ENCODE measurements at regions of chr13 and their contacts with region 1.

Region 1: GRCh38 chr13:112443995-112444860 is 68.1 kb downstream of the SPACA7 start:
- DNase-seq: peak; percentile 64 to 98
- H3K4me3 ChIP-seq: no peak overlapping the region
- H3K27ac ChIP-seq: no peak overlapping the region
- H3K4me1 ChIP-seq: peaks cover 0 to 4% (median 1%) of the 10 kb centered on the region in 4 experiments; a peak in 2 of 7 replicates
- H3K27me3 ChIP-seq: peaks cover 0 to 3% (median under 1%) of the 10 kb centered on the region in 4 experiments; a peak in 3 of 7 replicates
- CTCF ChIP-seq: peak in 2 of 3 experiments; percentile 94 to 99; a peak in 3 of 4 replicates
- EP300 ChIP-seq: no peak
- POLR2A ChIP-seq: no peak
- RAD21 ChIP-seq: peak; percentile 100

Region 2: DNA sequence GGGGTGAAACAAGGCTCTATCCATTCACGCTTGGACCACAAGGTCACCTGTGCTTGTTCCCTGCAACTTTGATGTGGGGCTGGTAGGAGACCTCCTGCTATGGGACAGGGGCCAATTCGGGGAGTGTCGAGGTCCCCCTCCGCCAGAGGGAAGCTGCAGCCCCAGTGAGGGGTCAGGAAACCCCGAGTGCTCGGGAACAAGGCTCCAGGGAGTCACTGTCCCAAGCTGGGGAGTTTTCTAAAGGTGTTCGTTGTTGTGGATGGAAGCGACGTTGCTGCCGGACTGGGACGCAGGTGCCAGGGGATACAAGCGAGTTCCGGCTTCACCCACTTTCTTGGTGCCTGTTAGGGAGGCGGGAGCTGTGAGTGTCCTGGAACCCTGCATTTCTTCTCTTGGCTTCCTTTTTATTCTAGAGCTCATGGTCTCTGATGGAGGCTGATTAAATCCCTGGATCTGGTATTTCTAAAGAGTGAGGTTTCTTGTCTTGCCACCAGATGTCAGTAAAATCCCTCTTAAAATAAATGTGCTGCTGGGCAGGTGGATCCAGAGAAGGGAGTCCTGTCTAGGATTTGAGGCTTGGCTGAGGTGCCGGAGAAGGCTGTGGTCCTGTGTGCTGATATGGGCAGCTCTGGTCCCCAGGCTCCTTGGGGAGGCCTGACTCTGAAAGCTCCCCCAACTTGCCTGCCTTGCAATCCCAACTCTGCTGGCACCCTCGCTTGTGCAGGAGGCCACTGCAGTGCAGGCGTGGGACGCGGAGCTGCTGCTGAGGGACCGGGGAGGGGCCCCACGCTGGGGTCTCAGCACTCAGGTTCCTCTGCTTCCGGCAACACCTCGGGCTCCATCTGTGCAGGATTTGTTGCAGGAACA is 969.9 kb before region 1 on chr13:
- CTCF ChIA-PET with region 1: interaction called, 43 read pairs
- POLR2A ChIA-PET with region 1: no interaction called
- DNase-seq: peak; percentile 25 to 47
- H3K4me3 ChIP-seq: no peak overlapping the region
- H3K27ac ChIP-seq: no peak overlapping the region
- H3K4me1 ChIP-seq: no peaks in the 10 kb centered on the region
- H3K27me3 ChIP-seq: no peaks in the 10 kb centered on the region
- CTCF ChIP-seq: peak in 2 of 3 experiments; percentile 55 to 57; a peak in 3 of 4 replicates
- EP300 ChIP-seq: no peak
- POLR2A ChIP-seq: no peak
- RAD21 ChIP-seq: peak; percentile 87 to 93

Region 3: DNA sequence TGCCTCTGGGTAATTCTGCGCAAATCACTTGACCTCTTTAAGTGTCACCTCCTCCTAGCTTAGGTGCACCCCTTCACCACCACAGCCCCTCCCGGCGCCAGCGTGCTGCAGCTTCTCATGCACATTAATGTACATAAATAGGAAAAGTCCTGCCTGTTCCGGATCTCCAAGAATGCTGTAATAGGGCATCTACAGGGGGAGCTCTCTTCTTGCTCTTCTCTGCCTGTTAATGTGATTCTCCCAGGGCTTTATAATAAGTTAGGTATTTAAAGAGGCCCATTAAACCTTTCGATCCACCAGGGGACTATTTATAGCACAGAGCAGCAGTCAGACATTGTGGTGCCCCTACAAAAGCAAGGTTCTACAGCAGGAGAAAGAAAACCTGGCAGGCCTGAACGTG is 342.0 kb before region 1 on chr13:
- CTCF ChIA-PET with region 1: interaction called, 14 read pairs
- POLR2A ChIA-PET with region 1: no interaction called
- DNase-seq: peak in 1 of 2 experiments; percentile 43
- H3K4me3 ChIP-seq: no peak overlapping the region
- H3K27ac ChIP-seq: no peak overlapping the region
- H3K4me1 ChIP-seq: peaks cover 0 to 28% (median 13%) of the 10 kb centered on the region in 4 experiments; a peak in 6 of 7 replicates
- H3K27me3 ChIP-seq: peaks cover 23 to 64% (median 56%) of the 10 kb centered on the region in 4 experiments
- CTCF ChIP-seq: peak in 2 of 3 experiments; percentile 21 to 28; a peak in 2 of 4 replicates
- EP300 ChIP-seq: no peak
- POLR2A ChIP-seq: no peak
- RAD21 ChIP-seq: peak; percentile 57 to 59

Region 4: DNA sequence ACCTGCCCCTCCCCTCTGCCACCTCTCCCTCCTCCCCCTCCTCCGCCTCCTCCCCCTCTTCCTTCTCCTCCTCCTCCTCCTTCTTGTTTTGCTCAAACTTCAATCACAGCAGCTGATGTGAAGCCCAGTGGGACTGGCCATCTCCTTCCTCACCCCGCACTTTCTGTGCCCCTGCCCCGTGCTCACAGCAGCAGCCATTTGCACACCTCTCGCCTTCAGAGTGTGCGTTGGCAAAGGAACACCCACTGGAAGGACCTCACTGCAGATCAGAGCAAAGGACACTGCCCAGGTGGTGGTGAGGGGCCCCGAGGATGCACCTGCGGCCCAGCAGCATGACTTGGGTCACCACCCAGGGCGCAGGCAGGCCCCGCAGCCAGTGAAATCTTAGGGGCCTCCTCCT is 278.5 kb before region 1 on chr13:
- CTCF ChIA-PET with region 1: interaction called, 10 read pairs
- POLR2A ChIA-PET with region 1: no interaction called
- DNase-seq: no peak
- H3K4me3 ChIP-seq: no peak overlapping the region
- H3K27ac ChIP-seq: no peak overlapping the region
- H3K4me1 ChIP-seq: peaks cover 8 to 24% (median 13%) of the 10 kb centered on the region in 4 experiments
- H3K27me3 ChIP-seq: no peaks in the 10 kb centered on the region; a peak in 1 of 7 replicates
- CTCF ChIP-seq: no peak
- EP300 ChIP-seq: no peak
- POLR2A ChIP-seq: no peak
- RAD21 ChIP-seq: no peak

Region 5: GRCh38 chr13:112333756-112334543 is 110.3 kb before region 1 on chr13:
- CTCF ChIA-PET with region 1: interaction called, 15 read pairs
- POLR2A ChIA-PET with region 1: no interaction called
- DNase-seq: no peak
- H3K4me3 ChIP-seq: no peak overlapping the region
- H3K27ac ChIP-seq: no peak overlapping the region
- H3K4me1 ChIP-seq: peaks cover 0 to 10% (median 5%) of the 10 kb centered on the region in 4 experiments; a peak in 2 of 7 replicates
- H3K27me3 ChIP-seq: peaks cover 0 to 44% (median 34%) of the 10 kb centered on the region in 4 experiments; a peak in 6 of 7 replicates
- CTCF ChIP-seq: no peak
- EP300 ChIP-seq: no peak
- POLR2A ChIP-seq: no peak
- RAD21 ChIP-seq: no peak

Region 6: DNA sequence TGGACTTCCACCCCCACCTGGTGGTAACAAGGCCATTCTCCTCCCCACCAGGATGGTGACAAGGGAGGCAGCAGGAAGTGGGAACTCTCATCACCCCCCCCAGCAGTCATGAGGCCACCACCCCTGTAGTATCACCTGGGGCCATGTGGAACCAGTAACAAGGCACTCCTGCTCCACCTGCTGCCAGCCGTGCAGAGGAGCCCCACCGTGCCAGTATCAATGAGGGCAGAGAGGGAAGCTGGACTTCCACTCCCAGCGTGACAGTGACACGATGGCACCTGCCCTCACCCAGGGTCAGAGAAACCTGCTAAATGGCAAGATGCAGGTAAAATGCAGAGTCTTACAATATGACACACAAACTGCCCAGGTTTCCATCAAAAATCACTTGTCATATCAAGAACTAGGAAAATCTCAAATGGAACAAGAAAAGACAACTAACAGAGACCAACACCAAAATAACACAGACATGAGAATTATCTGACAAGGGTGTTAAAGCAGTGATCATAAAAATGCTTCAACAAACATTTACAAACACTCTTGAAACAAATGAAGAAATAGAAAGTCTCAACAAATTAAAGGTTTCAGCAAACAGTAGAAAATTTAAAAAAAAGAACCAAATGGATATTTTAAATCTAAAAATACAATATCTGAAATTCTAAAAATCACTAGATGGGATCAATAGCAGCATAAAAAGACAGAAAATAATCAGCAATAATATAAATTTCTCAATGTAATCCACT is 77.2 kb before region 1 on chr13:
- CTCF ChIA-PET with region 1: interaction called, 13 read pairs
- POLR2A ChIA-PET with region 1: no interaction called
- DNase-seq: no peak
- H3K4me3 ChIP-seq: no peak overlapping the region
- H3K27ac ChIP-seq: no peak overlapping the region
- H3K4me1 ChIP-seq: peaks cover 0 to 8% (median 4%) of the 10 kb centered on the region in 4 experiments; a peak in 5 of 7 replicates
- H3K27me3 ChIP-seq: no peaks in the 10 kb centered on the region
- CTCF ChIP-seq: peak in 2 of 3 experiments; percentile 5 to 18; a peak in 3 of 4 replicates
- EP300 ChIP-seq: no peak
- POLR2A ChIP-seq: no peak
- RAD21 ChIP-seq: peak; percentile 18 to 43; a peak in 2 of 4 replicates

Measured in H1 (cell line).